ENCODE measurements at regions of chr4 and their contacts with region 1.

Region 1: DNA sequence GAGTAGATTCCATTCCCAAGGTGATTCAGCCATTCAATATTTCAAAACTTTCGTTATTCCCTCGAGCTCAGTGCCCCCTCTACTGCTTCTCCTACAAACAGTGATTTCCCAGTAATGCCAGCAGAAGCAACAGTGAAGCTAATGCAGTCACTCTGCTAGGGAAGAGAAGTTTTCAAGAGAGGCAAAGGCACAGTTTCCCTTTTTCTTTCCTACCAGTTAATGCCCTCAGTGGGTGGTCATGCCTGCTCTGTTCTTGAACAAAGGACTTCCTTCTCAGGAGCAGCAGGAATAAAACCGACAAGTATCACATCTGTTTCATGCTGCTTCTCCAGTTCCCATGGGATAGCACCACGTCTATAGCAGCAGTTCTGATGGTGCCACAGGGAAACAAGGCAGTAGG is 317.2 kb downstream of the TENM3 start:
- DNase-seq: no peak
- H3K4me3 Mint-ChIP-seq: no peak overlapping the region
- H3K27ac Mint-ChIP-seq: no peak overlapping the region
- H3K4me1 Mint-ChIP-seq: no peaks in the 10 kb centered on the region
- H3K27me3 Mint-ChIP-seq: peaks cover 10% of the 10 kb centered on the region

Region 2: DNA sequence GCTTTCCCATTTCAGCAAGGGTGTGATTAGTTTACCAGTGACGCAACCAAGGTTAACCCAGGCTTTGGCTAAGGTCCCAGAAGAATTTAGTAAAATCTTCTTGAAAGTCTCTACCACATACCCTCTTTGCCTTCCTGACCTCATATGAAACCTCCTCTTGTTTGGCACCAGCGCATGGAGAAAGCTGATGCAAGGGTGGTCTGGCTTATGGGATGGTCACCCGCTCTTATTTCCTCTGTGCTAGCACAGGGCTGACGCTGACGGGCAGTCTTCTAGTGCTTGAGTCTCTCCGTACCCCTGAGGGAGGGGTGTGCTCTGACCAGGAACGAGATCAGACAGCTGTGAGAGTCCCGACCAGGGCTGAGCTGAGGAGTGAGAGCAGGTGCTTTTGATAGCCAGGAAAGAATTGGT is 179.6 kb before region 1 on chr4:
- CTCF ChIA-PET with region 1: no interaction called
- intact Hi-C with region 1: no loop called
- DNase-seq: no peak
- H3K4me3 Mint-ChIP-seq: no peak overlapping the region
- H3K27ac Mint-ChIP-seq: no peak overlapping the region
- H3K4me1 Mint-ChIP-seq: no peaks in the 10 kb centered on the region
- H3K27me3 Mint-ChIP-seq: peaks cover 4% of the 10 kb centered on the region

Region 3: GRCh38 chr4:182533964-182534363 is 26.4 kb before region 1 on chr4:
- CTCF ChIA-PET with region 1: no interaction called
- intact Hi-C with region 1: no loop called
- DNase-seq: no peak
- H3K4me3 Mint-ChIP-seq: no peak overlapping the region
- H3K27ac Mint-ChIP-seq: no peak overlapping the region
- H3K4me1 Mint-ChIP-seq: no peaks in the 10 kb centered on the region
- H3K27me3 Mint-ChIP-seq: peaks cover 7% of the 10 kb centered on the region

Region 4: GRCh38 chr4:182604161-182604622 is 43.8 kb after region 1 on chr4:
- CTCF ChIA-PET with region 1: no interaction called
- intact Hi-C with region 1: loop called (anchors 5 kb)
- DNase-seq: no peak
- H3K4me3 Mint-ChIP-seq: no peak overlapping the region
- H3K27ac Mint-ChIP-seq: no peak overlapping the region
- H3K4me1 Mint-ChIP-seq: no peaks in the 10 kb centered on the region
- H3K27me3 Mint-ChIP-seq: peaks cover 2% of the 10 kb centered on the region

Region 5: GRCh38 chr4:183348706-183349659 is 788.6 kb after region 1 on chr4:
- CTCF ChIA-PET with region 1: no interaction called
- intact Hi-C with region 1: no loop called
- DNase-seq: peak; percentile 73
- H3K4me3 Mint-ChIP-seq: no peak overlapping the region
- H3K27ac Mint-ChIP-seq: no peak overlapping the region
- H3K4me1 Mint-ChIP-seq: peaks cover 17% of the 10 kb centered on the region
- H3K27me3 Mint-ChIP-seq: peaks cover 28% of the 10 kb centered on the region

Measured in activated naive CD4-positive, alpha-beta T cell treated with anti-CD3 and anti-CD28 coated beads for 36 hours (primary cell).